ENCODE measurements at regions of chr22 and their contacts with region 1.

Region 1: GRCh38 chr22:45863981-45864751 is 112.8 kb downstream of the WNT7B start:
- DNase-seq: peak; percentile 24
- H3K4me3 ChIP-seq: no peak overlapping the region
- H3K27ac ChIP-seq: no peak overlapping the region
- H3K4me1 ChIP-seq: peaks cover 15% of the 10 kb centered on the region
- H3K27me3 ChIP-seq: peaks cover 21% of the 10 kb centered on the region
- CTCF ChIP-seq: peak; percentile 94 to 95

Region 2: GRCh38 chr22:45577746-45578523 is 286.2 kb before region 1 on chr22:
- CTCF ChIA-PET with region 1: no interaction called
- dilution Hi-C with region 1: no loop called
- in situ Hi-C with region 1: no loop called
- intact Hi-C with region 1: loop called (anchors 1 kb)
- DNase-seq: peak; percentile 55
- H3K4me3 ChIP-seq: no peak overlapping the region
- H3K27ac ChIP-seq: no peak overlapping the region
- H3K4me1 ChIP-seq: no peaks in the 10 kb centered on the region
- H3K27me3 ChIP-seq: no peaks in the 10 kb centered on the region
- CTCF ChIP-seq: peak; percentile 83 to 98

Region 3: DNA sequence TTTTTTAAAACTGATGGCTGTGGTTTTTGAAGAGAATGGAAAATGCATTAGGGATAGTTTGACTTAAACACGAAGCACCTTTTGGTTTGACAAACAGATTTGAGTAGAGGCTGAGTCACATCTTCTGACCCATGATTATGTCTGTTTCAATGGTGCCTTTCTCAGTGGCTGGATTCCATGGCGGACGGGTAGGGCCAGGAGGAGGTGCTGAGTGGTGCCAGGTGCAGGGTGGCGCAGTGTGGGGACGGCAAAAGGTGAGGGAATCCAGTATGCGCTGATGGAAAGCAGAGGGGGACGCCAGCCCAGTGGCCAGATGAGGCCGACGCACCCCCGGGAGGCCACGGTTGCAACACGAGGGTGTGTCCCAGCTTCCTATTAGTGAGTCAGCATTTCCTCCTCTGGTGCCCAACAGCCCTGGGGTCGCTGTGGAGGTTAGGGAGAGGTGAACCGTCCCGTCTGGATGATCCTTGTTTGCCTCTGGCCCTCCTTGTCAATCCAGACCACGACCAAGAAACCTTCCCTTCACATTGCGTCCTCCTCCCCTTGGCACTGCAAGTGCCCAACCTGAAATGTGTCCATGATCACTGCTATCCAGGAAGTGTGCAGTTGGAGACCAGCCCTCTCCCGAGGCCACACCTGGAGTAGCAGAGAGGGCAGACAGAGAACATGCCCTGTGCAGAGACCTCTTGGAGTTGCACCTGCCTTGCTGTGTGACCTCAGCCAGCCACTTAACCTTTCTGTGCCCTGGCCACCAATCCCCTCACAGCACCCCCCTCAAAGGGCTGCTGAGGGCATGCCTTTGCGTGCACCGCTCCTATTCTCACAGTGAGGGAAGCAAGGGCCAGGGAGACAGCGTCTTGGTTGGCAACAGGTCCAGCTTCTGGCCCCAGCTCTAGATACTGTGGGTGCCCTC is 225.1 kb before region 1 on chr22:
- CTCF ChIA-PET with region 1: no interaction called
- dilution Hi-C with region 1: loop called (anchors 5 kb)
- in situ Hi-C with region 1: loop called in 1 of 2 experiments (anchors 10 kb)
- intact Hi-C with region 1: no loop called
- DNase-seq: peak; percentile 79
- H3K4me3 ChIP-seq: no peak overlapping the region
- H3K27ac ChIP-seq: peak overlapping the region; percentile 78
- H3K4me1 ChIP-seq: peaks cover 22% of the 10 kb centered on the region
- H3K27me3 ChIP-seq: no peaks in the 10 kb centered on the region
- CTCF ChIP-seq: peak in 1 of 2 donors; percentile 13

Region 4: DNA sequence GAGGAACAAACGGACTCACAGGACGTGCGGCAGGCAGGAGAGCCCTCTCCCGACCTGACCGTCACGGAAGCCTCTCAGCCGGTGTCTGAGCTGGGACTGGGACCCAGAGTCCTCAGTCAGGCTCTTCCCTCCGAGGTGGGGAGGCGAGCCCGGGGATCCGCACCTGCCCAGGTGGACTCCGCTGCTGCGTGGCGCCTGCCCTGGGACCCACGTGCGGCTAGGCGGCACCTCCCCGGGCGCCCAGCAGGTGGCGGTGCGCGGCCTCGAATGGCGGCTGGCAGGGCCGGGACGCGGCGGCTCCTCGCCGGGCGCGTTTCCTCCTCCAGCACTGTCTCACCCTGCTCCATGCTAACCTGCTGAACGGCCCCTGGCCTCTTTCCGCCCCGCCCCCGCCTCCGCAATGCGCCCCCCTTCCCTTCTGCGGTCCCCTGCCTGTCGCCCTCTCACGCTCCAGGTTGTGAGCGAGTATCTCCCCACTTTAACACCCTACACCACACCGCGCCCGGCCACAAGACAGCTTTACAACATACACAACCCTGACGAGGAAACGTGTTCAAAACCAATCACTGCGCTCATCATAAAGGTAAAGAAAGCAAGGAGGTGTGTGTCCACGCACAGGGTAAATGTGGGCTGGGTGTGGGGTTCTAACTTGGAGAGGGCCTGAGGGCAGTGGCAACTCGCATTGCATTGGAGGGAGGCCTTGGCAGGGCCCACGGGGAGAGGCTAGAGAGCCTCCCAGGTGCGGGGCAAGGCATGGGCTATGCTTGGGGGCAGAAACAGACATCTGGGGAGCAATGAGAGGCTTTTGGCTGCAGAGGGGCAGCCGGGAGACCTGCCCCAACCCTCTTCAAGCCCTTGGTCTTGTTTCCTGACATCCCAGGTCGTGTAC is 218.4 kb before region 1 on chr22:
- CTCF ChIA-PET with region 1: no interaction called
- dilution Hi-C with region 1: loop called (anchors 5 kb)
- in situ Hi-C with region 1: loop called in 1 of 2 experiments (anchors 10 kb)
- intact Hi-C with region 1: loop called (anchors 1 kb)
- DNase-seq: peak; percentile 46
- H3K4me3 ChIP-seq: no peak overlapping the region
- H3K27ac ChIP-seq: no peak overlapping the region
- H3K4me1 ChIP-seq: peaks cover 4% of the 10 kb centered on the region
- H3K27me3 ChIP-seq: no peaks in the 10 kb centered on the region
- CTCF ChIP-seq: peak; percentile 72 to 79

Region 5: GRCh38 chr22:45817745-45818423 is 46.3 kb before region 1 on chr22:
- CTCF ChIA-PET with region 1: interaction called, 6 read pairs
- dilution Hi-C with region 1: loop called (anchors 5 kb)
- in situ Hi-C with region 1: no loop called
- intact Hi-C with region 1: no loop called
- DNase-seq: no peak
- H3K4me3 ChIP-seq: no peak overlapping the region
- H3K27ac ChIP-seq: no peak overlapping the region
- H3K4me1 ChIP-seq: no peaks in the 10 kb centered on the region
- H3K27me3 ChIP-seq: no peaks in the 10 kb centered on the region
- CTCF ChIP-seq: no peak

Region 6: DNA sequence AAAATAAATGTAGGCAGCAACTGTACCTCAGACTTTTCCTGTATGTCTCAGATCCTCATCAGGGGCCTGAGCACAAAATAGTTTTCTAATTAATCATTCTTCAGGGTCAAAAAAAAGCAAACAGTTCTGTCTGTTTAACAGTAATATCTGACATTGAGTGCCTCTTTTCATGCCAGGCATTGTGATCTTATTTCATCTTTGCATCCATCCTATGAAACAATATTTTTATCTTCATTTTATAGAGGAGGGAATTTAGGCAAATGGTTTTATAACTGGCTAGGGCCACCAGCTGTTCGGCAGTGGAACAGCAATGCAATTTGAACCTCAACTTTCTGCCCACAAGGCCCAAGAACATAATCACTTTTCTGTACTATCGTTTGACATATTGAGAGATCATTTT is 32.8 kb before region 1 on chr22:
- CTCF ChIA-PET with region 1: no interaction called
- dilution Hi-C with region 1: no loop called
- in situ Hi-C with region 1: no loop called
- intact Hi-C with region 1: no loop called
- DNase-seq: no peak
- H3K4me3 ChIP-seq: no peak overlapping the region
- H3K27ac ChIP-seq: no peak overlapping the region
- H3K4me1 ChIP-seq: peaks cover 30% of the 10 kb centered on the region
- H3K27me3 ChIP-seq: no peaks in the 10 kb centered on the region
- CTCF ChIP-seq: peak; percentile 15 to 46

Region 7: DNA sequence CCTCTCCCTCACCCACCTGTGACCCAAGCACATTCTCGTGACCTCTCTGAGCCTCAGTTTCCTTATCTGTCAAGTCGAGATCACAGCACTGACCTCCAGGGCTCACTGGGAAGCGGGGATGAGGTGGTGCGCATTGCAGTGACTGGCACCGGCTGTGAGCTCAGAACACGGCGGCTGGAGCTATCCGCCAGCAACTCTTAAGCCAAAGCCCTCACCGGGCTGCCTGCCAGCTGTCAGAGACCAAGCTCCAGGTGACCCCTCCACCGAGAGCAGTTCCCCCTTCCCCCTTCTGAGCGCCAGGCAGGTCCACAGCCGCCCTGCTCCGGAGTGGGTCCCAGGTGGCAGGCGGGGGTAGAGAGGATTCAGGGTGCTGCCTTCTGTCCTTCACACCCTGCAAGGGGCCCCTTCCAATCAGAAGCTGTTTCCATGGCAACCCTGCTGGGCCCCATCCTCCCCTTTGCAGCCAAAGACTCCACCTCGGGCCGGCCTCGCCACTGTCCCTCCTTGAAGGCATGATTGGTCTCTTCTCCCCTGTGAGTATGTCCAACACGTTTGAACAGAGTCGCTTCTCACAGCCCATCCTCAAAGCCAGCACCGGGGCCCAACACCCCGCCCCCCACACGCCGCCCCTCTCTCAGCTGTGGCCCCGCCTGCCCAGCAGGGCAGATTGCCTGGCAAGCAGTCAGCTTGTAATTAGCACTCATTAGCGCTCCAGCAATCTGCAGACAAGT is 14.1 kb after region 1 on chr22:
- CTCF ChIA-PET with region 1: no interaction called
- dilution Hi-C with region 1: no loop called
- in situ Hi-C with region 1: no loop called
- intact Hi-C with region 1: no loop called
- DNase-seq: no peak
- H3K4me3 ChIP-seq: no peak overlapping the region
- H3K27ac ChIP-seq: no peak overlapping the region
- H3K4me1 ChIP-seq: peaks cover 6% of the 10 kb centered on the region
- H3K27me3 ChIP-seq: peaks cover 12% of the 10 kb centered on the region
- CTCF ChIP-seq: no peak

Region 8: DNA sequence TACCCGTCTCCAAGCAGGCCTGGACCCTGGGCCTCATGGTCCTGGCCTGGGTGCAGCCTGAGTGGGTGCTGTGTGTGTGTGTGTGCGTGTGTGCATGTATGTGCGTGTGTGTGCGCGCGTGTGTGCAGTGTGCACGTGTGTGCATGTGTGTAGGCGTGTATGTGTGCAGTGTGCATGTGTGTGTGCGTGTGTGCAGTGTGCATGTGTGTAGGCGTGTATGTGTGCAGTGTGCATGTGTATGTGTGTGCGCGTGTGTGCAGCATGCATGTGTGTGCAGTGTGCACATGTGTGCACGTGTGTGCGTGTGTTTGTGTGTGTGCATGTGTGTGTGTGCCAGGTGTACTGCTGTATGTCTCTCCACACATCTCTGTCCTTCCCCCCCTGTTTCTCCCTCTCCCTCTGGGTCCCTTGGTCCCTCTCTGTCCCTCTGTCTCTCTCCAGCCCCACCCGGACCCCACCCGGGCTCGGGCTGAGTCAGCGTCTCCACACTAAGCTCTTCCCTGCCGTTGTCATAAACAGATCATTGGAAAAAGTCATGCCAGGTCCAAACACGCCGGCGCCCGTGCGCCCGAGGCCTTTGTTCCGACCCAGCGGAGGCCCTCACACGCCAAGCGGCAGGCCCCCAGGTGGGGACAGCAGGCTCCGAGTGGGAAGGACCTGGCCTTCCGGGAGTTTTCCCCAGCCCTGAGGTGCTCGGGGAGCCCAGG is 78.8 kb after region 1 on chr22:
- CTCF ChIA-PET with region 1: no interaction called
- dilution Hi-C with region 1: no loop called
- in situ Hi-C with region 1: no loop called
- intact Hi-C with region 1: no loop called
- DNase-seq: peak; percentile 37
- H3K4me3 ChIP-seq: no peak overlapping the region
- H3K27ac ChIP-seq: no peak overlapping the region
- H3K4me1 ChIP-seq: peaks cover 6% of the 10 kb centered on the region
- H3K27me3 ChIP-seq: peaks cover 5% of the 10 kb centered on the region
- CTCF ChIP-seq: no peak

Region 9: DNA sequence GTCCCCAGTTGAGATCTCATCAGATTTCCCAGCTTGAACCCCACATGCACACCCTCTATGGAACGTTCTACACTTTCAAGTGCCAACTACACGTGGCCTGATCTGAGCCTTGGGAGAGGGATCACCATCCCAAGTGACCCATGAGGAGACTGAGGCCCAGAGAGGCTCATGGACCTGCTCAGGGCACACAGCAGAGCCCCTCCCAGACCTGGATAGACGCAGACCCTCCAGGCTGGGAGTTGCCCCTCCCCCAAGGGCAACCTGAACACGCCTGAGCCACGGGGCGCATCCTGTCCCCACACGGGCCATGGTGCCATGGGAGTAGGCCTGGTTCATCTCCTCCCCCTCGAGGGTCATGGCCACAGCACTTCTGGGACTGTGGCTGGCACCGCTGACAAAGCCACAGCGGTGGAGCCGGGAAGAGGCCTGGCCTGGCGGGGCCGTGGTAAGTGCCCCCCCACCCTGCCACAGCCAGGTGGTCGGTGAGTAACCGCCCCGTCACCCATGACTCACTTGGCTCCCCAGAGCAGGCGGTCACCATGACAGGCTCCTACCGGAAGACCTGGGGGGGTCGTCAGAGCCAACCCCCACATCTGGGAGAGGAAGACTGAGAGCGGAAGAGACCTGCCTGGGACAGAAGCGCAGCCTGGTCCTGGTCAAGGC is 104.7 kb after region 1 on chr22:
- CTCF ChIA-PET with region 1: interaction called, 3 read pairs
- dilution Hi-C with region 1: no loop called
- in situ Hi-C with region 1: loop called in 1 of 2 experiments (anchors 25 kb)
- intact Hi-C with region 1: no loop called
- DNase-seq: peak; percentile 86
- H3K4me3 ChIP-seq: no peak overlapping the region
- H3K27ac ChIP-seq: no peak overlapping the region
- H3K4me1 ChIP-seq: peaks cover 32% of the 10 kb centered on the region
- H3K27me3 ChIP-seq: peaks cover 18% of the 10 kb centered on the region
- CTCF ChIP-seq: no peak

Region 10: GRCh38 chr22:45984316-45984916 is 120.2 kb after region 1 on chr22:
- CTCF ChIA-PET with region 1: no interaction called
- dilution Hi-C with region 1: loop called (anchors 5 kb)
- in situ Hi-C with region 1: no loop called
- intact Hi-C with region 1: no loop called
- DNase-seq: no peak
- H3K4me3 ChIP-seq: no peak overlapping the region
- H3K27ac ChIP-seq: no peak overlapping the region
- H3K4me1 ChIP-seq: no peaks in the 10 kb centered on the region
- H3K27me3 ChIP-seq: no peaks in the 10 kb centered on the region
- CTCF ChIP-seq: no peak